IMR-90 (cell line): ENCODE measurements at regions of chr20 and their contacts with region 1.

Region 1: DNA sequence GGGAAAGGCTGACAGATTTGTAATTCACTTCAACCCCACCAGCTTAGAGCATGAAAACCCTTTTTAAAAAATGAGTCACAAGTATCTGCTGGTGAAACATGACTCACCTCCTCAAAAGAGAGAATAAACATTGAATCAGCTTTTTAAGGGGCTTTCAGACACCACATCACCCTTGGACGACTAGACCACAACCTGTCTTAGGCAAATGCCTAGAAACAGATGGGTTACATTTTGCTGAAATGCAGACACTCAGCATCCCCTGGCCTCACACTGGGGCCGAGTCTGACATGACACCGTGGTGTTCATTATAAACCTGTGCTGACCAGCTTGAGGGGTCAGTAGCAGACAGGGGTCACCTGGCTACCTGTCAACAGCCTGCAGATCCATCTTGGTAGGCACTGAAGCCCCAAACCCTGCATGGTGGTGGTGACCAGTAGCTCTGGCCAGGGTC is 175.3 kb upstream of the CST7 start:
- DNase-seq: peak; percentile 72
- ATAC-seq: peak; percentile 64
- H3K4me3 ChIP-seq: no peak overlapping the region
- H3K27ac ChIP-seq: no peak overlapping the region
- H3K4me1 ChIP-seq: 0 out of 2 replicates have a peak, but pooled peaks cover 2% of the 10 kb centered on the region
- H3K27me3 ChIP-seq: peaks cover 26% of the 10 kb centered on the region
- CTCF ChIP-seq: no peak
- POLR2A ChIP-seq: no peak
- RAD21 ChIP-seq: no peak

Region 2: GRCh38 chr20:24522452-24523330 is 251.1 kb before region 1 on chr20:
- CTCF ChIA-PET with region 1: no interaction called
- POLR2A ChIA-PET with region 1: no interaction called
- dilution Hi-C with region 1: no loop called
- in situ Hi-C with region 1: no loop called
- intact Hi-C with region 1: loop called (anchors 10 kb)
- DNase-seq: no peak
- ATAC-seq: no peak
- H3K4me3 ChIP-seq: no peak overlapping the region
- H3K27ac ChIP-seq: no peak overlapping the region
- H3K4me1 ChIP-seq: no peaks in the 10 kb centered on the region
- H3K27me3 ChIP-seq: no peaks in the 10 kb centered on the region
- CTCF ChIP-seq: no peak
- POLR2A ChIP-seq: no peak
- RAD21 ChIP-seq: no peak

Region 3: GRCh38 chr20:25116739-25117458 is 343.1 kb after region 1 on chr20:
- CTCF ChIA-PET with region 1: no interaction called
- POLR2A ChIA-PET with region 1: no interaction called
- dilution Hi-C with region 1: no loop called
- in situ Hi-C with region 1: no loop called
- intact Hi-C with region 1: no loop called
- DNase-seq: no peak
- ATAC-seq: no peak
- H3K4me3 ChIP-seq: no peak overlapping the region
- H3K27ac ChIP-seq: no peak overlapping the region
- H3K4me1 ChIP-seq: no peaks in the 10 kb centered on the region
- H3K27me3 ChIP-seq: peaks cover 23% of the 10 kb centered on the region
- CTCF ChIP-seq: no peak
- POLR2A ChIP-seq: no peak
- RAD21 ChIP-seq: no peak